ENCODE measurements at regions of chr15 and their contacts with region 1.

Region 1: GRCh38 chr15:76139368-76140073 is 79.7 kb downstream of the TMEM266 start:
- DNase-seq: peak; percentile 65 to 94
- H3K4me3 ChIP-seq: peak overlapping the region in 2 of 4 experiments; percentile 2 to 8; a peak in 2 of 8 replicates
- H3K27ac ChIP-seq: no peak overlapping the region
- H3K4me1 ChIP-seq: peaks cover 5 to 12% (median 7%) of the 10 kb centered on the region in 4 experiments
- H3K27me3 ChIP-seq: no peaks in the 10 kb centered on the region; a peak in 1 of 7 replicates
- CTCF ChIP-seq: peak; percentile 80 to 97 (median 88)
- EP300 ChIP-seq: no peak
- POLR2A ChIP-seq: no peak
- RAD21 ChIP-seq: peak; percentile 94

Region 2: GRCh38 chr15:76057332-76058000 is 82.1 kb before region 1 on chr15:
- CTCF ChIA-PET with region 1: interaction called, 164 read pairs
- POLR2A ChIA-PET with region 1: interaction called, 11 read pairs
- DNase-seq: no peak
- H3K4me3 ChIP-seq: no peak overlapping the region
- H3K27ac ChIP-seq: no peak overlapping the region
- H3K4me1 ChIP-seq: peaks cover 0 to 16% (median 6%) of the 10 kb centered on the region in 4 experiments; a peak in 6 of 7 replicates
- H3K27me3 ChIP-seq: peaks cover 0 to 14% (median 3%) of the 10 kb centered on the region in 4 experiments; a peak in 5 of 7 replicates
- CTCF ChIP-seq: peak in 2 of 3 experiments; percentile 58 to 60; a peak in 3 of 4 replicates
- EP300 ChIP-seq: no peak
- POLR2A ChIP-seq: no peak
- RAD21 ChIP-seq: peak; percentile 61 to 66

Region 3: DNA sequence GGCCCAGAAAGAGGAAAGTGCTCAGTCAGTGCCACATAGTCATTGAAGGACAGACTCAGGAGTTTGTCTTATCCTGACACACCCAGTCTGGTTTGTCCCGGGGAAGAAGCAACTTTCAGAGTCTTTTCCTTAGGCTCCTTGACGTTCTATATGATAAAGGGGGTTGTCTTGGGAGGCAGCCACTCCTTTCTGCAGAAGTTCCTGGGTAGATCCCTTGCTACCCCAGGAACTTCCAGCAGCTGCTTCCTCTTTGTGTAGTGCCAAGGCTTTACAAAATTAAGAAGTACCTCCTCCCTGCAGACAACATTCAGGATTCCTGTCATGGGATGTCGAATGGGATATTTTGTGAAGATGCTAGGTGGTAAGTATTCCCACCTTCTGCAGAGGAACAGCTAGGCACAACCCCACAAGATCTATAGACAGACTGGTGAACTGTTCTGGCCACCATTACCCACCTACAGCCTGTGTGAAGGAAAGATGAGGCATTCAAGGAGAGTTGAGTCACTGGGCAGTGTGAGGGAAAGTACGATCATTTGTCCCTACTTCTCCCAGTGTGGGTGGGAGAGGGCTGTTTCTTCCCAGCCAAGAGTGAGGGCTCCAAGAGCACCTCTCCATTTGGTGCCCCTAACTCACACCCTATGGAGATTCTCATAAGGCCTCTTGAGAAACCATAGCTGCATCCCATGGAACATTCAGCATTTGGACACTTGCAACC is 68.4 kb before region 1 on chr15:
- CTCF ChIA-PET with region 1: interaction called, 22 read pairs
- POLR2A ChIA-PET with region 1: no interaction called
- DNase-seq: no peak
- H3K4me3 ChIP-seq: no peak overlapping the region
- H3K27ac ChIP-seq: no peak overlapping the region
- H3K4me1 ChIP-seq: no peaks in the 10 kb centered on the region
- H3K27me3 ChIP-seq: no peaks in the 10 kb centered on the region
- CTCF ChIP-seq: no peak
- EP300 ChIP-seq: no peak
- POLR2A ChIP-seq: no peak
- RAD21 ChIP-seq: no peak

Region 4: DNA sequence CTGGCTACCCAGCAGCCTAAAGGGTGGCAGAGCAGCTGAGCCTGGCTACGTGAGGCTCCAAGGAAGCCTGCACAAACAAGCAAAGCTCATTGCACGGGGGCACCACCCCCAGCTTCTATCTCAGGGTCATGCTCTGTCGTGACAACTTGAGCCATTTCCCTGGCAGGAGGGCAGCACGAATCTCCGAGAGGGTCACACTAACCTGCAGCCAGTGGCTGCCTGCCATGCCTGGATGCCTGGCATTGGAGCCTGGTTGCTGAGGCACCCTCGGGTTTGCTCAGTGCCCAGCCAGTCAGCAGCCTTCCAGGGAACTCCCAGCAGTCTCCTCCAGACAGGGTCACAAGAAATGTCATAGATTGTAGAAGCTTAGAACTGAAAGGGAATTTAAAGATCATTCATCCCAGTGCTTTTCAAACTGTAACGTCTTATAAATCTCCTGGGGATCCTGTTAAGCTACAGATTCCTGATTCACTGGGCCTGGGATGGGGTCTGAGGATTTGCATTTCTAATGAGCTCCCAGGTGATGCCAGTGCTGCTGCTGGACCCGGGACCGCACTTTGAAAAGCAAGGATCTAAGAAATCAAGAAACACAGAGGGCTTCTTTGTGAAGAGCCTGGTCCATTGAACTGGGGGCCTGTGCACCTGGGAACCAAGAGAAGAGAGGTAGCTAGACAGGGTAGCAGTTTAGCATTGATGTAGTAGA is 31.3 kb before region 1 on chr15:
- CTCF ChIA-PET with region 1: interaction called, 38 read pairs
- POLR2A ChIA-PET with region 1: no interaction called
- DNase-seq: no peak
- H3K4me3 ChIP-seq: no peak overlapping the region
- H3K27ac ChIP-seq: no peak overlapping the region
- H3K4me1 ChIP-seq: peaks cover 0 to 5% (median 3%) of the 10 kb centered on the region in 4 experiments; a peak in 5 of 7 replicates
- H3K27me3 ChIP-seq: no peaks in the 10 kb centered on the region
- CTCF ChIP-seq: no peak
- EP300 ChIP-seq: no peak
- POLR2A ChIP-seq: no peak
- RAD21 ChIP-seq: no peak

Region 5: GRCh38 chr15:76127880-76128279 is 11.6 kb before region 1 on chr15:
- CTCF ChIA-PET with region 1: interaction called, 47 read pairs
- POLR2A ChIA-PET with region 1: no interaction called
- DNase-seq: no peak
- H3K4me3 ChIP-seq: no peak overlapping the region
- H3K27ac ChIP-seq: no peak overlapping the region
- H3K4me1 ChIP-seq: 0 out of 7 replicates have a peak, but pooled peaks cover 0 to 2% (median 0%) of the 10 kb centered on the region in 4 experiments
- H3K27me3 ChIP-seq: no peaks in the 10 kb centered on the region
- CTCF ChIP-seq: no peak
- EP300 ChIP-seq: no peak
- POLR2A ChIP-seq: no peak
- RAD21 ChIP-seq: no peak

Region 6: DNA sequence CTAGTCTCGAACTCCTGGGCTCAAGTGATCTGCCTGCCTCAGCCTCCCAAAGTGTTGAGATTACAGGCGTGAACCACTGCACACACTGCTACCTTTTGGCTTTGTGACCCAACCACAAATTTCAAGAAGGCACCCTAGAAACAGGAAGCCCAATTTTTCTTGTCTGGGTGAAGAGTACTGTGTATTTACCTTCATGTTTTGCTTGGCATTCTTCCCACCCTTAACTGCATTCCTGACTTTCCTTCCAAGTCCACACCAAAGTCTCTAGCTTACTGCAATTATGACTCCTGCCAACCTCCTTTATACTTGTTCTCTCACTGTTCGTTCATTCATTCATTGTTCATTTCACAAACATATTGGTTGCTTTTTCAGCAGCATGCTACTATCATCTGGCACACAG is 77.5 kb after region 1 on chr15:
- CTCF ChIA-PET with region 1: no interaction called
- POLR2A ChIA-PET with region 1: no interaction called
- DNase-seq: no peak
- H3K4me3 ChIP-seq: no peak overlapping the region
- H3K27ac ChIP-seq: no peak overlapping the region
- H3K4me1 ChIP-seq: no peaks in the 10 kb centered on the region
- H3K27me3 ChIP-seq: no peaks in the 10 kb centered on the region
- CTCF ChIP-seq: no peak
- EP300 ChIP-seq: no peak
- POLR2A ChIP-seq: no peak
- RAD21 ChIP-seq: no peak